Heart right ventricle (tissue), 16 donors: ENCODE measurements at regions of chr17 and their contacts with region 1.

Region 1: GRCh38 chr17:45584092-45585036 is 93.8 kb upstream of the PLEKHM1 start:
- DNase-seq: peak; percentile 47 to 48
- ATAC-seq: peak; percentile 22 to 80 (median 73)
- H3K4me3 ChIP-seq: peak overlapping the region; percentile 58 to 93 (median 76)
- H3K27ac ChIP-seq: peak overlapping the region; percentile 63 to 93 (median 81)
- H3K4me1 ChIP-seq: peaks cover 0 to 29% (median 14%) of the 10 kb centered on the region in 9 donors
- H3K27me3 ChIP-seq: no peaks in the 10 kb centered on the region
- CTCF ChIP-seq: no peak

Region 2: DNA sequence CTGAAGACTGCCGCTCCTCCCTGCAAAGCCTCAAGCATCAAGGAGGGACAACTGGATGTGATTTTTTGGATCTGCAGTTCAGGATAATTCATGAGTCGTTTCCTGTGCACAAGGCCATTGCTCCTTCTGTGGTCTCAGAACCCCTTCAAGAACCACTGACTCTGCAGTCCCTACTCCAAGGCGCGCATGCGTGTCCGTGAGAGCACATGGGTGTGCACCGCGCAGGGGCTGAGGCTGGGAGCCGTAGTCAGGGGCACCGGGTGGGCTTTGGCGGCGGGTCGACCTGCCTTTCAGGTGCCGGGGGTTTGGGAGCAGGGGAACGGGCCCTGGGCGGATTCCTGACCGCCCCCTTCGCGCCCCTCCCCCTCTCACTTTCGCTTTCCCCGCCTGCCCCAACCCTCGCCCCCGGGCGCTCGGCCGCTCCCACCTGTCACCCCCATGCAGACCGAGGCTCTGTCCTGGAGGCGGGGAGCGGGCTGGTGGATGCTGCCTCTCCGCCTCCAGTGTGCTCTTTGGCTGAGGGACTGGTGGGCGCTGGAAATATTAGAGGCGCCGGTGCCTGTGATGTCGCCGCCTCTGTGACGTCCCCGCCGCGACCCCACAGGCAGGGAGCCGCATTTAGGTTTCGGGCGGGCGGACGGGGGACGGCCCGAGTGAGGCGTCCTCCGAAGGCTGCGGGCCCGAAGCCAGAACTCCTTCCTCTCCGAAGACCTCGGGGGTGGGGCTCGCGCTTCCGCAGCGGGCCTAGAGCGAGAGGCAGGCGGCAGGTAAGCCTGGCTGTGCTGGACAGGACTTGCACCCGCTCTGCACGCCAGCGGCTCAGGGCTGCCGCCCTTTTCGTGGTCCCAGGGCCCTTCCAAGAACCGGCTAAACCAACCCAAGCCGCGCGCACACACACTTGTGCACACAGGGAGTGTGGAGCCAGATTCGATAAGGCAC is 322.5 kb before region 1 on chr17 and contains the start of gene SPATA32:
- intact Hi-C with region 1: no loop called
- DNase-seq: peak; percentile 56 to 71
- ATAC-seq: peak; percentile 26 to 61 (median 53)
- H3K4me3 ChIP-seq: peak within 1 kb of the TSS; percentile 19 to 93 (median 66)
- H3K27ac ChIP-seq: peak within 1 kb of the TSS in 9 of 10 donors; percentile 27 to 74 (median 69)
- H3K4me1 ChIP-seq: peaks cover 12 to 50% (median 33%) of the 10 kb centered on the region in 9 donors
- H3K27me3 ChIP-seq: no peaks in the 10 kb centered on the region
- CTCF ChIP-seq: no peak
- total RNA-seq, gene SPATA32: 0.13 to 0.16 TPM in 2 of 10 donors, not detected in the others

Region 3: GRCh38 chr17:45307290-45308015 is 276.9 kb before region 1 on chr17:
- intact Hi-C with region 1: no loop called
- DNase-seq: no peak
- ATAC-seq: peak in 7 of 8 donors; percentile 3 to 46 (median 13)
- H3K4me3 ChIP-seq: no peak overlapping the region
- H3K27ac ChIP-seq: peak overlapping the region; percentile 0 to 83 (median 74)
- H3K4me1 ChIP-seq: peaks cover 49 to 97% (median 83%) of the 10 kb centered on the region in 9 donors
- H3K27me3 ChIP-seq: no peaks in the 10 kb centered on the region
- CTCF ChIP-seq: no peak

Region 4: GRCh38 chr17:45628019-45628418 is 43.7 kb after region 1 on chr17:
- intact Hi-C with region 1: no loop called
- DNase-seq: no peak
- ATAC-seq: no peak
- H3K4me3 ChIP-seq: no peak overlapping the region
- H3K27ac ChIP-seq: no peak overlapping the region
- H3K4me1 ChIP-seq: no peaks in the 10 kb centered on the region
- H3K27me3 ChIP-seq: no peaks in the 10 kb centered on the region
- CTCF ChIP-seq: no peak

Region 5: DNA sequence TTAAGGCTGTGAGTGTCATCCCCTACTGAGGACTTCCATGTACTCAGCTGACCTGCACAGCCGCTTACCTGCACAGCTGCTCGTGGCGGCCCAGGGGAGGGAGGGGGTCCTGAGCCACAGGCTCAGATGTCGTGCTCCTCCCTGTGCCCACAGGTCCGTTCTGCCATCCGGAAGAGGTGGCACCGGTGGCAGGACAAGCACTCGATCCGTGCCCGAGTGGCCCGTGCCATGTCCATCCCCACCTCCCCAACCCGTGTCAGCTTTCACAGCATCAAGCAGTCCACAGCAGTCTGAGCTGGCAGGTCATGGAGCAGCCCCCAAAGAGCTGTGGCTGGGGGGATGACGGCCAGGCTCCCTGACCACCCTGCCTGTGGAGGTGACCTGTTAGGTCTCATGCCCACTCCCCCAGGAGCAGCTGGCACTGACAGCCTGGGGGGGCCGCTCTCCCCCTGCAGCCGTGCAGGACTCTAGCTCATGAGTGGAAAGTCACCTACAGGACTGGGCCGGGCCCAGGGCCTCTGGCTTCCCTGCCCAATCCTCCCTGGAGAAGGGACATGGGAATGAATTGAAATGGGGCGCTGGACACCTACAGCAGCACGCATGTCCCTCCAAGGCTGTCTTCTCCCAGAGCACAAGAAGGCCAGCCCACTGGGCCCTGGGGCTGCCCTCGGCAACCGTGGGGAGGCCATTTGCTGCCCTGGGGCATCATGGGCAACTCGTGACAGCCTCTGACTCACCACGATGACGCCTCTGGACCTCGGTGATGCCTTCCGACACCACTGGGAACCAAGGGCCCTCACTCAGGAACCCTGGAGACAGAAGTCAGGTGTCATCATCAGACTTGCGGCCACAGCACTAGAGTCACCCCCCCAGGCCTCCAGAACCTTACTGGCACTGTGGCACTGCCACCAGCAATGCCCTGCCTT is 250.4 kb after region 1 on chr17:
- intact Hi-C with region 1: no loop called
- DNase-seq: no peak
- ATAC-seq: peak in 1 of 8 donors; percentile 5
- H3K4me3 ChIP-seq: no peak overlapping the region
- H3K27ac ChIP-seq: no peak overlapping the region
- H3K4me1 ChIP-seq: no peaks in the 10 kb centered on the region
- H3K27me3 ChIP-seq: peaks cover 0 to 73% (median 34%) of the 10 kb centered on the region in 7 donors
- CTCF ChIP-seq: no peak

Region 6: DNA sequence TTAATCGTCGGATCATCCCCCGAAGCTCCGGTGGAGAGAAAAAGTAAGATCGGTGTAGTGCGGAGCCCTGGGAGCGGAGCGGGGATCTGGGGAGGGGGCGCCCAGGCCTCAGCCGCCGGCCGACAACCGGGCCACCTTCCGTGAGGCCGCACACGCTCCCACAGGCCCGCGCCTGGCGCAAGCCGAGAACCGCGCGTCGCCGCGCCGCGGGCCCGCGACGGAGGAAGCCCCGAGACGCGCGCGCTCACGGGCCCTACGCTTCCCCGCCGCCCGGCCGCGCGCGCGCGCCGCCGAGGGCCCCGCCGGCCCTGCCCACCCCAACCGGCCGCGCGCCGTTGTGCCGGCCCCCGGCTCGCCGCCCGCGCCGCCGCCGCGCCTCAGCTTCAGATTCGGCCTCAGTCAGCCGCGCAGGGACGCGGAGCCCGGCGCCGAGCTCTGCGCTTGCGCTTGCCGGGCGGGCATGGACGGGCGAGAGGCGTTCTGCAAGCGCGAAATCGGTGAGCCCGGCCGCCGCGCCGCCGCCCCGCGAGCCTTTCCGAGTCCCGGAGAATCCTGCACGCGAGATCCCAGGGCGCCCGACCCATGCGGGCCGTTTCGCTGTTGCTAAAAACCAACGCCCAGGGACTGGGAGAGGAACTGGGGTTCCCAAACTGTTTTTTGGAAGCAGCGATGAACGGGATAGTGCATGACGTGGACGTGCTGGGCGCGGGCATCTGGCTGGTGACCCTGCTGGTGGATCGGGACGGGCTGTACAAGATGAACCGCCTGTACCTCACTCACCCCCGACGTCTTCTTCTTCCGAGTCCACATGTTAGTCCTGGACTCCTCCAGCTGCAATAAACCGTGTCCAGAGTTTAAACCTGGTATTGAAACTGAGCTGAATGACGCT is 682.5 kb after region 1 on chr17:
- intact Hi-C with region 1: loop called in 2 of 10 experiments (anchors 5 kb)
- DNase-seq: peak; percentile 85 to 90
- ATAC-seq: peak; percentile 87 to 99 (median 93)
- H3K4me3 ChIP-seq: peak overlapping the region; percentile 61 to 95 (median 72)
- H3K27ac ChIP-seq: peak overlapping the region; percentile 33 to 95 (median 88)
- H3K4me1 ChIP-seq: peaks cover 5 to 28% (median 12%) of the 10 kb centered on the region in 9 donors
- H3K27me3 ChIP-seq: no peaks in the 10 kb centered on the region
- CTCF ChIP-seq: peak in 2 of 9 donors; percentile 3 to 8